ENCODE measurements at regions of chr11 and their contacts with region 1.

Region 1: GRCh38 chr11:83819933-83820549 is 533.9 kb upstream of the CCDC90B start:
- DNase-seq: peak in 1 of 2 donors; percentile 20
- H3K4me3 ChIP-seq: no peak overlapping the region
- H3K27ac ChIP-seq: no peak overlapping the region
- H3K4me1 ChIP-seq: no peaks in the 10 kb centered on the region
- H3K27me3 ChIP-seq: no peaks in the 10 kb centered on the region
- CTCF ChIP-seq: peak; percentile 56 to 61 (median 58)
- POLR2A ChIP-seq: no peak

Region 2: DNA sequence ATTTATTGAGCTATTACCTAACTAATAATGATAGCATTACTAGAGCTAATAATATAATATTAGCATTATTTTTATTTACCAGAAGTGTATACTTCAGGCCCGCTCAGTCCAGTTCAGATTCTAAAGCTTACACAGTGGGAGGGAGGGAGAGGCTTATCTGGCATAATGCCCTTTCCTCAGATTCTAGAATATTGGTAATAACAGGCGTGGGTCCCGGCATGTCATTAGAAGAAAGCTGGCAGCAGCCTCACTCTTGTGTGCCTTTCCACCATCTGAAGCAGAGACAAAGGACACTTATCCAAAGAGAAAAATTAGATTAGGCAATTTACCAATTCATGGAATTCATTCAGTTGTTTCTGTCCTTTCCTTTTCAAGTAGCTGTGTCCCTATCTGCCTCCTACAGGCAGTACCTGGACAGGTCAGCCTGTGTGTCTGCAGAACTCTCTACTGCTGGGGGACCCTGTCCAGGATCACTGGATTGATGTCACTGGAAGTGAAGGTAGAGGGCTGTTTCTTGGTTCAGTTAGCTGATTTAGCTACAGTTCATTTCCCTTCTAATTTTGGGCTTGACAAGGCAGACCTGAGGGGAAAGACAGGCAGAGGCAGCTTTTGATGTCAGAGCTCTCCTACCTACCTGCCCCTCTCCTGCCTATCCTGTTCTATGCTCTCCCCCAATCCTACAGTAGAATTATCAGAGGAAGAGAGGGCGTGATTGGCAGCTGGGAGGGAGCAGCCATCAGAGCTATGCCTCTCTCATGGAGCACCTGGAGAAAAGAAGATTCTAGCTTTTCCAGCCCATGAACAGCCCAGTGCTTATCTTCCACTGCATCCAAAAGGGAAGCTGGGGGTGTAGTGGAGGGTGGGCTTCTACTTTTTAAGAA is 513.6 kb before region 1 on chr11:
- intact Hi-C with region 1: loop called (anchors 10 kb)
- DNase-seq: no peak
- H3K4me3 ChIP-seq: no peak overlapping the region
- H3K27ac ChIP-seq: no peak overlapping the region
- H3K4me1 ChIP-seq: no peaks in the 10 kb centered on the region
- H3K27me3 ChIP-seq: no peaks in the 10 kb centered on the region
- CTCF ChIP-seq: no peak
- POLR2A ChIP-seq: no peak

Region 3: DNA sequence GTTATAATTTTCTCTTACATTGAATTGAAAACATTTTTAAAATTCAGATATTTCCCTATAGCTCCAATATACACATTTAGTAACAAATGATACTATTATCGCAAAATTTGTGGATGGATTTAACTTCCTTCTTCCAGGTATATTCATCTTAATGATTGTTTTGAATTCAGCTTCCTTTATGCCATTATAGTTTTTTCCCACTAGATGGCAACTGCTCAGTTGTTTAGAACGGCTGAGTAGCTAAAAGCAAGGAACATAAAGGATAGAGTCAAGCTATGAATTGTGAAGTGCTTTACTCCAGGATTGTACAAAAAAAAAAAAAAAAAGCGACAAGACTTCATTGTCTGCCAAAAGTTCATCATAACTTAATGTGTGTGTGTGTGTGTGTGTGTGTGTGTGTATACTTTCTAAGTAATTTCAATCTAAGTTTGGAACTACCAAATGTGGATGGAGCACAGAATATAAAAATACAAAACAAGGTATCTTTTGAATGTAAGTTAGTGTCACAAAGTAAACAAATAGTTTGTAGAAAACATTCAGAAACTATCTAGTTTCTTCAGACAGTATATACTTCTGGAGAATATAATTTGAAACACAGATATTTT is 960.8 kb after region 1 on chr11:
- intact Hi-C with region 1: no loop called
- DNase-seq: no peak
- H3K4me3 ChIP-seq: no peak overlapping the region
- H3K27ac ChIP-seq: no peak overlapping the region
- H3K4me1 ChIP-seq: no peaks in the 10 kb centered on the region
- H3K27me3 ChIP-seq: no peaks in the 10 kb centered on the region
- CTCF ChIP-seq: peak in 1 of 4 experiments; percentile 15
- POLR2A ChIP-seq: no peak

Measured in uterus (tissue), 4 donors.